SK-N-SH (cell line): ENCODE measurements at regions of chr7 and their contacts with region 1.

Region 1: DNA sequence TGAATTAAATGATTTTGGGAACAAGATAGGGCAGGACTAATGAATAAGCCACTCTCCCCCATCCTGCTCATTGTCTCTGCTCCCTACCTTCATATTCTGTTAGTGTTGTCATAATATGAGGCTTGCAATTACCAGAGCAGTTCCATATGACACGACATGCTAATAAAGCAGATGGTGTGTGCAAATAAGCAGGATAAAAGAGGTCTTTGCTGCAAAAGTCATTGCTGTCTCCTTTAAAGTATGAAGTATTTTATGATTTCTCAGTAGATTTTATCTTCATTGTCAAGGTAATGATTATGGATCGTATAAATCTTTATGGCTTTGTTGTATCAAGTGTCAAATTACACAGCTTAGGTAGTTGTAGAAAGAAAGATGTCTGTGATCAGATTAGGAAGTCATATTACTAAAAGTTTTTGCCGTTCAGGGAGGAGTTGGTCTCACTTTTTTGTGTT is 114.8 kb downstream of the SDK1 start:
- DNase-seq: no peak
- H3K4me3 ChIP-seq: no peak overlapping the region
- H3K27ac ChIP-seq: no peak overlapping the region
- H3K4me1 ChIP-seq: no peaks in the 10 kb centered on the region; a peak in 2 of 4 replicates
- H3K27me3 ChIP-seq: no peaks in the 10 kb centered on the region
- CTCF ChIP-seq: no peak
- EP300 ChIP-seq: no peak
- RAD21 ChIP-seq: no peak

Region 2: DNA sequence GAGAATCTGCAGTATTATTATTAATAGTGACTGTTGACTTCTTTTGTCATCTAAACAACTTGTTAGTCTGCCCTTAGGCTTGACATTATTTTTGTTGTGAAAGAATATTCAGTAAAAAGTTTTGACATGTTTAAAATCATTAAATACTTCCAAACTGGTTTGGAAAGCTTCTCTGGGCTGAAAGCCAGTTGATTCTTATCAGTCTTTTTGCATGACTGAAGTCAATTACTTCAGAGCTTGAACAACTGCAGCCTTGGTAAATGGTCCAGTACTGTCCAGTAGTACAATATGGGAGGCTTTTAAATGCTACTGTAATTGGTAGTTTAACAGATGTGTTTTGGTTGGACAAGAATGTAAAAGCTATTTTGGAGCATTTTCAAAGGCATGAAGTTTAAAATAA is 11.4 kb before region 1 on chr7:
- CTCF ChIA-PET with region 1: interaction called, 12 read pairs
- POLR2A ChIA-PET with region 1: no interaction called
- DNase-seq: peak; percentile 67
- H3K4me3 ChIP-seq: no peak overlapping the region
- H3K27ac ChIP-seq: peak overlapping the region in 1 of 2 experiments; percentile 90; a peak in 2 of 4 replicates
- H3K4me1 ChIP-seq: peaks cover 0 to 27% of the 10 kb centered on the region in 2 experiments; a peak in 3 of 4 replicates
- H3K27me3 ChIP-seq: no peaks in the 10 kb centered on the region
- CTCF ChIP-seq: no peak
- EP300 ChIP-seq: peak; percentile 9 to 91; a peak in 3 of 4 replicates
- RAD21 ChIP-seq: peak; percentile 38